HepG2 (cell line): ENCODE measurements at regions of chr12 and their contacts with region 1.

Region 1: DNA sequence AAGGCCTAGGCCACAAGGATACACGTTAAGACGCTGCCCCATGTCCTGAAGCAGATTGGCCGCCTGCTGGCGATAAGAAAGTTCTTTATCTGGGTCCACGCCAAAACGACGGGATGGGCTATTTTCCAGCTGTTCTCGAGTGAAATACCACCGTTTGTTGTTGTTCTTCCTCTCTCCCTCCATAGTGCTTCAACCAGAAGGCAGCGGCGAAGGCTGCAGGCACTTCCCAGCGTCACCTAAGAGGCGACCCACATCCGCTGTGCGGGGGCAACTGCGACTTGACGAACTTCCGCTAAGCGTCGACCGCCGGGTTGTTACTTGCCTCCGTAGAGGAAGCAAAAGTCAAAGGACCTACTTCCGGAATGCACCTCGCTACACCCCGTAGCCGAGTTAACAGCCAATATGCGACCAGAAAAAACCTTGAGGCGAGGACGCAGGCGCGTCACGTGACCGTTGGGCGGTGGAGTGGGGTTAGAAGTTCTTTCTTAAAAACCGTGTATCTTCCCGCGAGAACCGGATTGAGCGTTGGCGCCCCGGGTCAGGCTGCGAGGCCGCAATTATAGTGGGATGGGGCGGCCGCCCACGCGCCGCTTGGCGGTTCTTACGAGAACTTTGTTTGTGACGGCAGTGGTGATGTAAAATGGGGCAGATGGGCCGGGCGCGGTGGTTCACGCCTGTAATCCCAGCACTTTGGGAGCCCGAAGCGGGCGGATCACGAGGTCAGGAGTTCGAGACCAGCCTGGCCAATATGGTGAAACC is at the start of gene CCNT1:
- DNase-seq: peak; percentile 100
- ATAC-seq: peak; percentile 98
- H3K4me3 ChIP-seq: peak within 1 kb of the TSS; percentile 84 to 96 (median 89)
- H3K27ac ChIP-seq: peak within 1 kb of the TSS; percentile 96
- H3K4me1 ChIP-seq: peaks cover 22% of the 10 kb centered on the region
- H3K27me3 ChIP-seq: peaks cover 0 to 4% of the 10 kb centered on the region in 2 experiments; a peak in 1 of 5 replicates
- CTCF ChIP-seq: peak; percentile 28
- EP300 ChIP-seq: peak; percentile 27 to 40; a peak in 1 of 4 replicates
- POLR2A ChIP-seq: peak; percentile 77 to 92
- RAD21 ChIP-seq: no peak; the same call in none of the 2 replicates
- total RNA-seq, gene CCNT1: 26.8 and 28.2 TPM in 2 replicates

Region 2: GRCh38 chr12:48681738-48682532 is 34.7 kb before region 1 on chr12 and contains the start of gene KANSL2:
- CTCF ChIA-PET with region 1: no interaction called
- POLR2A ChIA-PET with region 1: interaction called, 8 read pairs
- in situ Hi-C with region 1: no loop called
- intact Hi-C with region 1: loop called (anchors 1 kb)
- DNase-seq: peak; percentile 98
- ATAC-seq: peak; percentile 97
- H3K4me3 ChIP-seq: peak within 1 kb of the TSS; percentile 82 to 91 (median 85)
- H3K27ac ChIP-seq: peak within 1 kb of the TSS; percentile 93
- H3K4me1 ChIP-seq: peaks cover 39% of the 10 kb centered on the region
- H3K27me3 ChIP-seq: no peaks in the 10 kb centered on the region; a peak in 1 of 5 replicates
- CTCF ChIP-seq: peak; percentile 32
- EP300 ChIP-seq: peak in 1 of 2 experiments; percentile 1; a peak in 1 of 4 replicates
- POLR2A ChIP-seq: peak; percentile 99
- RAD21 ChIP-seq: peak; percentile 8; the same call in 1 of the 2 replicates
- total RNA-seq, gene KANSL2: 40.1 and 41.3 TPM in 2 replicates

Region 3: DNA sequence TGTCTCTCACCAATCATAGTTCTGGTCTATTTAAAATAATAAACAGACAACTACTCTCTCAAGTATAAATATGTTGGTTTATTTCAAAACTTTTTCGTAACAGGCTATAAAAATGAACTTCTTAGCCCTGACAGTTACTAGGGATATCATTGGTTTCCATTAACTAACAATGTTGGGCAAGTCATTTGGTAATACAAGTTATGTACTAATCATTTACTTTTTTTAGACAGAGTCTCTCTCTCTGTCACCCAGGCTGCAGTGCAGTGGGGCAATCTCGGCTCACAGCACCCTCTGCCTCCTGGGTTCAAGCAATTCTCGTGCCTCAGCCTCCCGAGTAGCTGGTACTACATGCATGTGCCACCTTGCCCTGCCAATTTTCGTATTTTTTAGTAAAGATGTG is 20.0 kb before region 1 on chr12:
- CTCF ChIA-PET with region 1: no interaction called
- POLR2A ChIA-PET with region 1: no interaction called
- in situ Hi-C with region 1: no loop called
- intact Hi-C with region 1: loop called (anchors 1 kb)
- DNase-seq: no peak
- ATAC-seq: no peak
- H3K4me3 ChIP-seq: no peak overlapping the region
- H3K27ac ChIP-seq: no peak overlapping the region
- H3K4me1 ChIP-seq: peaks cover 17% of the 10 kb centered on the region
- H3K27me3 ChIP-seq: no peaks in the 10 kb centered on the region
- CTCF ChIP-seq: no peak
- EP300 ChIP-seq: no peak
- POLR2A ChIP-seq: no peak
- RAD21 ChIP-seq: no peak

Region 4: DNA sequence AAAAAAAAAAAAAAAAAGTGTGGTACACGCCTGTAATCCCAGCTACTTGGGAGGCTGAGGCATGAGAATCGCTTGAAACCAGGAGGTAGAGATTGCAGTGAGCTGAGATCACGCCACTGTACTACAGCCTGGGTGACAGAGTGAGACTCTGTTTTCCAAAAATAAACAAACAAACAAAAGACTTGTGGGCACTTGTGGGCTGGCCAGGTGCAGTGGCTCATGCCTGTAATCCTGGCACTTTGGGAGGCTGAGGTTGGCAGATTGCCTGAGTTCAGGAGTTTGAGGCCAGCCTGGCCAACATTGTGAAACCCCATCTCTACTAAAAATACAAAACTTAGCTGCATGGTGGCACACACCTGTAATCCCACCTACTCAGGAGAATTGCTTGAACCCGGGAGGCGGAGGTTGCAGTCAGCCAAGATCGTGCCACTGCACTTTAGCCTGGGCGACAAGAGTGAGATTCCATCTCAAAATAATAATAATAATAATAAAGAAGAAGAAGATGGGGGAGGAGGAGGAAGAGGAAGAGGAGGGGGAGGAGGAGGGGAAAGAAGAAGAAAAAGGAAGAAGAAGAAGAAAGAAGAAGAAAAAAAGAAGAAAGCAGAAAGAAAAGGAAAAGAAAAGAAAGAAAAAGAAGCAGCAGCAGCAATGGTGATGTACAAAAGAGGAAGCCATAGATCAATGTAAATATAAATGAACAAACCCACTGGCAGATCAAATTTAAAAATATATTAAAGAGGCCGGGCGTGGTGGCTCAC is 27.8 kb after region 1 on chr12:
- CTCF ChIA-PET with region 1: no interaction called
- POLR2A ChIA-PET with region 1: no interaction called
- in situ Hi-C with region 1: no loop called
- intact Hi-C with region 1: no loop called
- DNase-seq: no peak
- ATAC-seq: no peak
- H3K4me3 ChIP-seq: no peak overlapping the region
- H3K27ac ChIP-seq: no peak overlapping the region
- H3K4me1 ChIP-seq: no peaks in the 10 kb centered on the region
- H3K27me3 ChIP-seq: no peaks in the 10 kb centered on the region; a peak in 2 of 5 replicates
- CTCF ChIP-seq: no peak
- EP300 ChIP-seq: no peak
- POLR2A ChIP-seq: no peak
- RAD21 ChIP-seq: no peak